Lower leg skin (tissue), 4 donors: ENCODE measurements at regions of chr11 and their contacts with region 1.

Region 1: GRCh38 chr11:66386171-66387069 is 14.9 kb upstream of the SLC29A2 start:
- DNase-seq: peak; percentile 89 to 97
- H3K4me3 ChIP-seq: no peak overlapping the region
- CTCF ChIP-seq: peak in 1 of 3 donors; percentile 59
- POLR2A ChIP-seq: no peak

Region 2: DNA sequence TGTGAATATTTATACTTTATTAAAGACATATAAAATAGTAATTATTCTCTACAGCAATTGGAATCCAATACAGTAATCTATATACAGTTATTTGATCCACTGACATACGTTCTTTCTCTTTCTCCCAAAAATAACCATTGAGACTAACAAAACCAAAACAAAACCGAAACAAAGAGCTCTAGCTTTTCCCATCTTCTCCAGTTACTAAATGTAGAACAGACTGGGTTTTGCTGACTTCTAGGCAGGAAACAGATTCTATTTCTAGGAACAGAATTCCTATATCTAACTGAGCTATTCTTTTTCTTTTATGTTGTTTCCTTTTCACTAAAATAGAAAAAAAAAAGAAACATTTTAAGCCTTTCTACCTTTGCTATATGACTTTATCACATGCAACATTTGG is 236.3 kb before region 1 on chr11:
- intact Hi-C with region 1: no loop called
- DNase-seq: no peak
- H3K4me3 ChIP-seq: no peak overlapping the region
- CTCF ChIP-seq: no peak
- POLR2A ChIP-seq: no peak

Region 3: DNA sequence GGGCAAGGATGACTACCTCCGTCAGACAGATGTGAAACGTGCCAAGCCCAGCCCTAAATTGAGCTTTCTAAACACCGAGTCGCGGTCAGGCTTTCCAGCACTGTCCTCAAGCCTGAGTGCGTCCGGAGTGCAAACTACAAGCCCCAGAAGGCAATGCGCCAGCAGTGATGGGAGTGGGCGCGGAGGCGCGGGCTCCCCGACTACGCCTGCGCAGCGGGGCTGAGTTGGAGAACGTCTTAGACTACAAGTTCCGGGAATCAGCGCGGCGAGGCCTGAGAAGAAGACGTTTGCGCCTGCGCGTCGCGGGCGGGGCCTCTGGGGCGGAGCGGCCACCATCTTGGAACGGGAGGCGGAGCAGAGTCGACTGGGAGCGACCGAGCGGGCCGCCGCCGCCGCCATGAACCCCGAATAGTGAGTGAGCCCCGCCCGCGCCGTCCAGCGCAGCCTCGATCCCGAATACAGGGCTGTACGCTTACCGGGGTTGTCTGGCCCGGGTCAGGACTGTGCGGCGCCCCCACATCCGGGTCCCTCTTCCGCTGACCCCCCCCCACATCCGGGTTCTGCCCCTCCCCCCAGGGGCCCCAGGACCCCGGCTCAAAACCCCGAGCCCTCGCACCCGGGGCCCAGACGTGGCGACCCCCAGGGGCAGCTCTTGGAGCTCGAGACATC is 118.0 kb before region 1 on chr11 and contains the start of gene RAB1B:
- intact Hi-C with region 1: no loop called
- DNase-seq: peak; percentile 100
- H3K4me3 ChIP-seq: peak within 1 kb of the TSS; percentile 76
- CTCF ChIP-seq: no peak
- POLR2A ChIP-seq: no peak
- total RNA-seq, gene RAB1B: 118 to 143 (median 126) TPM

Region 4: GRCh38 chr11:66309475-66309874 is 76.9 kb before region 1 on chr11:
- intact Hi-C with region 1: loop called (anchors 5 kb)
- DNase-seq: no peak
- H3K4me3 ChIP-seq: no peak overlapping the region
- CTCF ChIP-seq: no peak
- POLR2A ChIP-seq: no peak